Posterior cingulate gyrus (tissue), 11 donors: ENCODE measurements at regions of chr18 and their contacts with region 1.

Region 1: DNA sequence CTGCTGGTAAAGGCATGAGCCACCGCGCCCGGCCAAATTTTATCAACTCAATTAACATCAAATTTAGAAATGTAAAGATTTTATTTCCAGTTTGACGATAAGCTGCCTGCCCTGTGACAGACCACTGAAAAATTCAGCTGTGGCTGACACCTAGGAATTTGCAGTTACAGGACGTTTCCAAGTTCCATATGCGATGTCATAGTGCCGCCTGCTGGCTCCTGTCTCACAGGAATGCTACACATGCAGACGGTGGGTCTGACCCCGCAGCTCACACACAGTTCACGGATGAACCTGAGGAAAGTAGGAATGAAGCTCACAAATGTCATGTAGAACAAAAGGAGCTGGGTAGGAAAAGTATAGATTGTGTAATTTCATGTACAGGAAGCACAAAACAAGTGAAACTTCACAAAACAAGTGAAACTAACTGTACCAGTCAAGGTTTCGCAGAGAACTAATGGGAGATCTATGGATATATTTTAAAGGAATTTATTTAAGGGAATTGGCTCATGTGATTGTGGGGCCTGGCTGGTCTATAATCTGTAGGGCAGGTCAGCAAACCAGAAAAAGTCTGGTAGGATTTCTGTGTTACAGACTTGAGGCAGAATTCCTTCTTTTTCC is 13.2 kb upstream of the SEH1L start:
- DNase-seq: peak; percentile 59 to 97 (median 86)

Region 2: DNA sequence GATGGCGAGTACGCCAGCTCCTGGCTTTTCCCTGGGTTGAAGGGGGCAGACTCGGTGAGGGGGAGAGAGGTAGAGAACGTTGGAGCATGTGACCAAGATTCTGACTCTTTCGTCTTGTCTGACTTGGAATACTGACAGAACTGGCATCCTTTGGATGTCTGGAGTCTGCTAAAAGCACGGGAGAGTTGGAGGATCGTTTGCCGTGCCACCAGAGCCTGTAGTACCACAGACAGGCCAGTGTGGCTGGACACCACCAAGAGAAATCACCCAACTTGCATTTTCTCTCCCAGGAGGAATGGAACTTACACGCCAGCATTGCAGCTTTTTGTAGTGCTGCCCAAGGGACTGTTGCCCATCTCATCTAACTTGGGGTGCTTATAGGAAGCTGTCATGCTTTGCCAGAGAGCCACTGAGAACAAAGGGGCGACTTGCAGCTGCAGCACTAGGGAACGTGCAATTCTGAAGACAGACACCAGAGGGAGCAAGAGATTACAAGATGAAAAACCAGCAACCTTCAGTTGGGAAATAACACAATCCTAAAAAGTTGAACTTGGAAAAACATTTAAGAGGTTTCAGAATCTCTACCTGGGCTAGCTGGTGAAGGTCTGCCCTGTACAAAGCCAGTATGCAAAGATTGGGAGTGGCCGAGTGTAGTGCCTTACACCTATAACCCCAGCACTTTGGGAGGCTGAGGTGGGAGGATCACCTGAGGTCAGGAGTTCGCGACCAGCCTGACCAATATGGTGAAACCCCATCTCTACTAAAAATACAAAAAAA is 207.6 kb before region 1 on chr18:
- intact Hi-C with region 1: loop called (anchors 1 kb)
- DNase-seq: peak in 6 of 10 donors; percentile 22 to 88 (median 54)

Region 3: GRCh38 chr18:12744103-12744502 is 190.5 kb before region 1 on chr18:
- intact Hi-C with region 1: loop called (anchors 1 kb)
- DNase-seq: no peak

Region 4: DNA sequence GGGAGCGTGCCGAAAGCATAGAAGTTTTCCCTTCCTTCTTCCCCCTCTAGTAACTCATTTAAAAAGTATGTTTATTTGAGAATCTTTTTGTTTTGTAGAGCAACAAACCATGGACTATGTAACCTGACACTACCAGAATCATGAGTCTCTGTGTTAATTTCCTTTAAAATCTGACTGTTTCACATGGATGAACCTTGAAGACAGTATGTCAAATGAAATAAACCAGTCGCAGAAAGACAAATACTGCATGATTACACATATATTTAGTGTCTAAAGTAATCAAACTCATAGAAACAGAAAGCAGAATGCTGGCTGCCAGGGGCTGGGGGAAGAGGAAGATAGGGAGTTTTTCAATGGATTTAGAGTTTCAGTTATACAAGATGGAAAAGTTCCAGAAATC is 82.8 kb before region 1 on chr18:
- intact Hi-C with region 1: no loop called
- DNase-seq: no peak

Region 5: GRCh38 chr18:13513021-13513420 is 578.5 kb after region 1 on chr18:
- intact Hi-C with region 1: no loop called
- DNase-seq: no peak